Heart right ventricle (tissue), 16 donors: ENCODE measurements at regions of chr5 and their contacts with region 1.

Region 1: GRCh38 chr5:80487829-80488721 is at the start of gene FAM151B:
- DNase-seq: peak; percentile 72 to 77
- ATAC-seq: peak; percentile 90 to 98 (median 94)
- H3K4me3 ChIP-seq: peak within 1 kb of the TSS; percentile 37 to 78 (median 71)
- H3K27ac ChIP-seq: peak within 1 kb of the TSS in 9 of 10 donors; percentile 54 to 85 (median 80)
- H3K4me1 ChIP-seq: peaks cover 0 to 21% (median 5%) of the 10 kb centered on the region in 9 donors
- H3K27me3 ChIP-seq: no peaks in the 10 kb centered on the region
- CTCF ChIP-seq: peak in 5 of 9 donors; percentile 10 to 52 (median 47)
- total RNA-seq, gene FAM151B: 1.3 to 2.8 (median 1.4) TPM

Region 2: DNA sequence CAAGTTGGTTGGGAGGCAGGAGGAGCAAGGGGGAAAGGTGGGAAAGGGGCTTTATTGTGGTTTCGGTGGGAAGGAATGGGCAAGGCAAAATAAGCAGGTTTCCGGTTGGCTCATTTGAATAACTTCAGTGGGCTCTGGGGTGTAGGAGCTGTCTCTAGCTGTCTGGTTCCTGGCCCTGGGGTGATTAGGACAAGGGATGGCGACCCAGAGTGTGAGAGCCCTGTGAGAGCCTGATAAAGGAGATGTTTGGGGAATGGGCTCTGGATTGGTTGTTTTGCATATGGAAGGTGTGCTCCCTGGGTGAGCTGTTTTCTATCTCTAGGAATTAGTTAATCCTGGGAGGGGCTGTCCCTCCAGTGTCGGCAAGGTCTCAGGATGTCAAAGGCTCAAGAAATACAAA is 66.6 kb after region 1 on chr5:
- intact Hi-C with region 1: no loop called
- DNase-seq: no peak
- ATAC-seq: no peak
- H3K4me3 ChIP-seq: no peak overlapping the region
- H3K27ac ChIP-seq: no peak overlapping the region
- H3K4me1 ChIP-seq: no peaks in the 10 kb centered on the region
- H3K27me3 ChIP-seq: peaks cover 0 to 78% (median 40%) of the 10 kb centered on the region in 7 donors
- CTCF ChIP-seq: no peak

Region 3: DNA sequence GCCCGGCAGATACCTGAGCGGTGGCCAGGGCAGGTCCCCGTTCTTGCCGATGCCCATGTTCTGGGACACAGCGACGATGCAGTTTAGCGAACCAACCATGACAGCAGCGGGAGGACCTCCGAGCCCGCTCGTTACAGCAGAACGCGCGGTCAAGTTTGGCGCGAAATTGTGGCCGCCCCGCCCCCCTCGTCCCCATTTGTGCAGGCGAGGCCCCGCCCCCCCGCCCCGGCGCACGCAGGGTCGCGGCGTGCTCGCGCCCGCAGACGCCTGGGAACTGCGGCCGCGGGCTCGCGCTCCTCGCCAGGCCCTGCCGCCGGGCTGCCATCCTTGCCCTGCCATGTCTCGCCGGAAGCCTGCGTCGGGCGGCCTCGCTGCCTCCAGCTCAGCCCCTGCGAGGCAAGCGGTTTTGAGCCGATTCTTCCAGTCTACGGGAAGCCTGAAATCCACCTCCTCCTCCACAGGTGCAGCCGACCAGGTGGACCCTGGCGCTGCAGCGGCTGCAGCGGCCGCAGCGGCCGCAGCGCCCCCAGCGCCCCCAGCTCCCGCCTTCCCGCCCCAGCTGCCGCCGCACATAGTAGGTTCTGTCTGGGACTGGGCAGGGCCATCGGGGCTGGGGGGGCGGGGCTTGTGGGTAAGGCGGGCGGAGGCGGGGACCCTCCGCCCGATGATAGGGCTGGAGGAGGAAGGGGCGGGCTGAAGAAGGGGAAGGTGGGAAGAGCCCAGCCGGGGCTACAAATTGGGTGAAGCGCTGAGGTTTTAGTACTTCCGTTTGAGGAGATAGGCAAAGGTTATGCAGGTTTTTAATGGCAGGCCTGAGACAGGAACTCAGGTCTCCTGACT is 166.5 kb after region 1 on chr5 and contains the starts of genes DHFR and MSH3:
- intact Hi-C with region 1: loop called in 1 of 10 experiments (anchors 10 kb)
- DNase-seq: peak; percentile 87 to 90
- ATAC-seq: peak; percentile 43 to 74 (median 62)
- H3K4me3 ChIP-seq: peak within 1 kb of the TSS; percentile 69 to 100 (median 94)
- H3K27ac ChIP-seq: peak within 1 kb of the TSS; percentile 88 to 99 (median 97)
- H3K4me1 ChIP-seq: peaks cover 0 to 27% (median 18%) of the 10 kb centered on the region in 9 donors
- H3K27me3 ChIP-seq: no peaks in the 10 kb centered on the region
- CTCF ChIP-seq: peak in 5 of 9 donors; percentile 5 to 50 (median 38)
- total RNA-seq, gene DHFR: 4.3 to 19.6 (median 10.1) TPM
- total RNA-seq, gene MSH3: 8.0 to 15.1 (median 12.0) TPM

Region 4: DNA sequence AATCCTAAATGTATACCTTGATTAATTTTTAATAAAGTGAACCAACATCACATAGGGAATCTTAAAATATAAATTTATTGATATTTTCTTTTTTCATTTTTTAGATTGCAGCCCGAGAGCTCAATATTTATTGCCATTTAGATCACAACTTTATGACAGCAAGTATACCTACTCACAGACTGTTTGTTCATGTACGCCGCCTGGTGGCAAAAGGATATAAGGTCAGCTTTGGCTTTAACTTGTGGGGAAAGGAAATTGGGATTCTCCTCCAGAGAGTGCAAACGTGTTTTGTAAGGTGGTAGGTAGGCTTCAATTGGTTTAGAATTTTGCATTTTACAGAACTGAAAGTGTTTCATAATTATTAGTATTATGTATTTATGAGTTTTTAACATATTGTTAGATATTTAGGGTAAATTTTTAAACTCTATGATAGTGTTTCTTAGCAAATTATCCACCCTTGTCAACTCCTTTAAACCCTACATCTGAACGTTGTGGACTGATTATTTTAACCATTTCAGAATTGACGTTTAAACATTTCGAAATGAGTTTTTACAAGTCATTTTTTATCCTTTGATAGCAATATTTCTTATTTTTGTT is 184.2 kb after region 1 on chr5:
- intact Hi-C with region 1: loop called in 7 of 10 experiments (anchors 5 to 10 kb)
- DNase-seq: peak; percentile 27 to 58
- ATAC-seq: peak in 6 of 8 donors; percentile 53 to 77 (median 68)
- H3K4me3 ChIP-seq: no peak overlapping the region
- H3K27ac ChIP-seq: no peak overlapping the region
- H3K4me1 ChIP-seq: peaks cover 0 to 7% (median 0%) of the 10 kb centered on the region in 9 donors
- H3K27me3 ChIP-seq: no peaks in the 10 kb centered on the region
- CTCF ChIP-seq: peak; percentile 68 to 89 (median 78)

Region 5: DNA sequence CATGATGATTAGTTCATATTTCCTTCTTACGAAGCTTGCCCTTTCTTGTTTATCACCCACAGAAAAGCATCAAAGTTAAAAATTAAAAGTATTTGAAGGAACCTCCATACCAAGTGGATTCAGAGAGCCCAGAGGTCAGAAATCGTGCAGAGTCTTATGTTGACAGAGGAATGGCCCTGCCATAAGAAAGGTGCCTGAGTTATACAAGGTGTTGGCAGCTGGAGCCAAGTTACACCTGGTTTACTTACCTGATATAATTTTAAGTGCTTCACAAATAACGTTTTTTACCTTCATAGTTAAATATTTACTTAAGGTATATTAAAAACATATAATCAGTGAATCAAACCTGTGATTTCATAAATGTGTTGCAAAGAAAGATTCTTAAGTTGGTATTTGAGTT is 209.0 kb after region 1 on chr5:
- intact Hi-C with region 1: no loop called
- DNase-seq: no peak
- ATAC-seq: no peak
- H3K4me3 ChIP-seq: no peak overlapping the region
- H3K27ac ChIP-seq: no peak overlapping the region
- H3K4me1 ChIP-seq: peaks cover 0 to 4% (median 0%) of the 10 kb centered on the region in 9 donors
- H3K27me3 ChIP-seq: no peaks in the 10 kb centered on the region
- CTCF ChIP-seq: no peak

Region 6: GRCh38 chr5:81187885-81188284 is 699.8 kb after region 1 on chr5:
- intact Hi-C with region 1: loop called in 2 of 10 experiments (anchors 10 kb)
- DNase-seq: peak; percentile 65 to 75
- ATAC-seq: peak; percentile 50 to 88 (median 78)
- H3K4me3 ChIP-seq: no peak overlapping the region
- H3K27ac ChIP-seq: peak overlapping the region in 7 of 10 donors; percentile 26 to 59 (median 42)
- H3K4me1 ChIP-seq: peaks cover 0 to 17% (median 3%) of the 10 kb centered on the region in 9 donors
- H3K27me3 ChIP-seq: no peaks in the 10 kb centered on the region
- CTCF ChIP-seq: no peak